ENCODE measurements at regions of chr22 and their contacts with region 1.

Region 1: DNA sequence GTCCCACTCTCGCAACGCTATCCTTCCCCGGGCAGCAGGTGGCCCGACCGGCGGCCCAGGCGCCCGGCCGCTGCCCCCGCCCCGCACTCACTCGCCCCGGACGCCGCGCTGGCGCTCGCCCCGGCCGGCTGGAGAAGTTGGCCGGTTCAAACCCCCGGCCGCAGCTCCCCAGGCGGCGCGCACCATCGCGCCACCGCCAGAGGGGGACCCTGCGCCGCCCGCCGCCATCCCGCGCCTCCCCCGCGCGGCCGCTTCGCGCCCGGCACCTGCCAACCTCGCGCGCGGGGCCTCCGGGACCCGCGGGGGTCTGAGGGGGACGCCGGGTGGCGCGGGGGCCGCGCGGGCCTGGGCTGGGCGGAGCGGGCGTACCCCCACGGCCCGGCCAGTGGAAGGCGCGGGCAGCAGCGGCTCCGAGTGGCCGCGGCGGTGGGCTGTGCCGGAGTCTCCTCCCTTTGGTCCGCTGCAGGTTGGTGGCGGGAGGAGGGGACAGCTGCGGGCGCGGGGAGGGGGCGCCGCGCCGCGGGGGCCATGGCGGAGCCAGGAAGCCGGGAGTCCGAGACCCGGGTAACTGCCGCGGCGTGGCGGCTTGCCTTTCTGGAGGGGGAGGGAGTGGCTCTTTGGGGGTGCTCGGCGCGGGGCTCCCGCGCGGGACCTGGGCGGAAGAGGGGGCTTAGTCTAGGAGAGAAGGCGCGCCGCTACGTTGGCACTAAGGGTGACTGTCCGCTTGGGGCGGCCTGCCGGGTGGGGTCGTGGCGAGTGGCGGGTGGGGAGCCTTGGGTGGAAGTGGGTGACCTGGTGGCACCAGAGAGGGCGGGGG is at the starts of genes MPST and TST:
- DNase-seq: peak; percentile 66
- H3K4me3 Mint-ChIP-seq: peak within 1 kb of the TSS; percentile 89
- H3K27ac Mint-ChIP-seq: peak within 1 kb of the TSS; percentile 77
- H3K4me1 Mint-ChIP-seq: peaks cover 22% of the 10 kb centered on the region
- H3K27me3 Mint-ChIP-seq: peaks cover 67% of the 10 kb centered on the region

Region 2: DNA sequence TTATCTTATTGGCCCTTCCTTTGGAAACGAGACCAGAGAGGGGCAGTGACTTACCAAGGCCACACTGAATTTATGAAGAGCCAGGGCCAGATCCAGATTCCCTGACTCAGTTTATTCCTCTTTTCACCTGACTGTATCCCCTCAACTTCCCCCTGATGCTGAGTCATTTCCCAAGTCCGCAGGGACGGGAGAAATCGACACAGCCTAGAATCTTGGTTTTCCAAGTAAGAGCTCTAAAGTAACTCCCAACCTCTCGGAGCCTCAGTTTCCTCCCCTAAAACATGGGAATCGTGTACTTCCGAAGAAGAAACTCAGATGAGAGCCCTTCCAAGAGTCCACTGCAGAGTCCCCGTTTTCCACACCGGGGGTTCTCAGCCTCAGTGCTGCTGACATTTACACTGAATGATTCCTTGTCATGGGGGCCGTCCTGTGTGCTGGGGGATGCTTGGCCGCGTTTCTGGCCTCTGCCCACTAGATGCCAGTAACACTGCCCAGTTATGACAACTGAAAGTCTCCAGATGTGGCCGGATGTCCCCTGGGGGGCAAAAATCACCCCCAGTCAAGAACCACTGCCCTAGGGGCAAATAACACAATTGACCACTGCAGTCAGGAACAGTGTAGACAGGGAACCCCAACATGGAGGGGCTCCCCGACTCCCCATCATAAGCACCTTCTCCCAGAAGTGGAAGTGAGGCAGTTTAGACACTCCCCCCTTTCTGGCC is 11.2 kb after region 1 on chr22:
- CTCF ChIA-PET with region 1: interaction called, 12 read pairs
- DNase-seq: no peak
- H3K4me3 Mint-ChIP-seq: no peak overlapping the region
- H3K27ac Mint-ChIP-seq: no peak overlapping the region
- H3K4me1 Mint-ChIP-seq: no peaks in the 10 kb centered on the region
- H3K27me3 Mint-ChIP-seq: peaks cover 36% of the 10 kb centered on the region

Region 3: DNA sequence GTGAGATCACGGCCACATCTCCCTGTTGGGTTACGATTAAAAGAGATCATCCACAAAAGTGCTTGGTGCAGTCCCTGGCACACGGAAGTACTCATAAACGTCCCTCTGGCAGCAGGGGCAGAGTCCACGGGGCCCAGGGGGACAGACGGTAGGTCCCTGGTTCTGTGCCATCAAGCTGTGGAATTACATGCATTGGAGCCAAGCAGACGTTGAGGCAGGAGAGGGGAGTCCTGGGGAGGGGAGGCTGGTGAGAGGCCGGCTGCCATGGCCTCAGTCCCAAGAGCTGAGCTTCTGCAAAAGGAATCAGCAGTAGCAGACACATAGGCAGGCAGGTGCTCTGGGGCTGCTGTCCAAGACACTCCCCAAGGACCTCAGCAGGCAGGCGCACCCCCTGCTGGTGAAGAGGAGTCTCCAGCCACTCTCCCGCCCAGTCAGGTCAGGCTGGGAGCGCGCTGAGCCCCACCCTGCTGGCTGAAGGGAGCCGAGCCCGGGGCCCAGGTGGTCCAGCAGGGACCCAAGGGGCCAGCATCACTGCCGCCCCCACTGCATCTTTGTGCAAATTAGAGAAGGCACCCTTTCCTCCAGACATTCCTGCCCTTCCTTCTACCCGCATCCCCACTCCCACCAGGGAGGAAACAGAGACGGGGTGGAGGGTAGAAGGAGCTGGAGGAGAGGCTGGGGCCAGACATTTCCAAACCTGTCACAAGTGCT is 24.5 kb after region 1 on chr22:
- CTCF ChIA-PET with region 1: interaction called, 38 read pairs
- DNase-seq: peak; percentile 74
- H3K4me3 Mint-ChIP-seq: no peak overlapping the region
- H3K27ac Mint-ChIP-seq: no peak overlapping the region
- H3K4me1 Mint-ChIP-seq: peaks cover 15% of the 10 kb centered on the region
- H3K27me3 Mint-ChIP-seq: peaks cover 26% of the 10 kb centered on the region

Region 4: GRCh38 chr22:37330200-37331033 is 310.9 kb after region 1 on chr22:
- CTCF ChIA-PET with region 1: no interaction called
- DNase-seq: peak; percentile 56
- H3K4me3 Mint-ChIP-seq: no peak overlapping the region
- H3K27ac Mint-ChIP-seq: no peak overlapping the region
- H3K4me1 Mint-ChIP-seq: peaks cover 7% of the 10 kb centered on the region
- H3K27me3 Mint-ChIP-seq: peaks cover 100% of the 10 kb centered on the region

Measured in activated naive CD4-positive, alpha-beta T cell treated with anti-CD3 and anti-CD28 coated beads, Interleukin-2, amount 10 ng/mL, durations not matched to agents 7 days and 5 days (primary cell).